Activated CD4-positive, alpha-beta memory T cell treated with anti-CD3 and anti-CD28 coated beads for 36 hours (primary cell): ENCODE measurements at regions of chr12 and their contacts with region 1.

Region 1: DNA sequence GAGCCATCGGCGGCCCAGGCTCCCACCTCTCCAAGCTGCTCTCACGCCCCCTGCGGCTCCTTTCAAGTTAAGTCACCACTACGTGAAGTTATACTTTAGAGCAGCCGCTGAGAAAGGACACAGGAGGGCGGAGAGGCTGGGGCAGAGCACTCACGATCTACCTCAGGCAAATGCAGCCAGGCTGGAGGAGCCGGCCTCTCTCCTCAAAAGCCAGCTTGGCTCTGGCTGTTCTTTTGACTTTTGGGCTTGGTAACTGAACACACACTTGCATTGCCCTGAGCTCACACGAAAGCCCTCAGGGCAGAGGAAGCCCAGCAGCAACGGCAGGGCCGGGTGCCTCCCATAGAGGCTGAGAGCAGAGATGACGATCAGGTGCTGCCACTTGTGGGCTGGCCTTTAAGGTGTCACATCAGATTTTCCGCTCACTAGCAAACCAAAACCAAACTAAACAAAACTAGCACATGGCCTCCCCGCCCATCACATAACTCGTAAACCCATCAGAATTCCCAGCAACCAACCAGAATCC is 75.2 kb downstream of the PITPNM2 start:
- DNase-seq: peak; percentile 88
- H3K4me3 Mint-ChIP-seq: peak overlapping the region; percentile 68
- H3K27ac Mint-ChIP-seq: peak overlapping the region; percentile 95
- H3K4me1 Mint-ChIP-seq: peaks cover 41% of the 10 kb centered on the region
- H3K27me3 Mint-ChIP-seq: no peaks in the 10 kb centered on the region

Region 2: DNA sequence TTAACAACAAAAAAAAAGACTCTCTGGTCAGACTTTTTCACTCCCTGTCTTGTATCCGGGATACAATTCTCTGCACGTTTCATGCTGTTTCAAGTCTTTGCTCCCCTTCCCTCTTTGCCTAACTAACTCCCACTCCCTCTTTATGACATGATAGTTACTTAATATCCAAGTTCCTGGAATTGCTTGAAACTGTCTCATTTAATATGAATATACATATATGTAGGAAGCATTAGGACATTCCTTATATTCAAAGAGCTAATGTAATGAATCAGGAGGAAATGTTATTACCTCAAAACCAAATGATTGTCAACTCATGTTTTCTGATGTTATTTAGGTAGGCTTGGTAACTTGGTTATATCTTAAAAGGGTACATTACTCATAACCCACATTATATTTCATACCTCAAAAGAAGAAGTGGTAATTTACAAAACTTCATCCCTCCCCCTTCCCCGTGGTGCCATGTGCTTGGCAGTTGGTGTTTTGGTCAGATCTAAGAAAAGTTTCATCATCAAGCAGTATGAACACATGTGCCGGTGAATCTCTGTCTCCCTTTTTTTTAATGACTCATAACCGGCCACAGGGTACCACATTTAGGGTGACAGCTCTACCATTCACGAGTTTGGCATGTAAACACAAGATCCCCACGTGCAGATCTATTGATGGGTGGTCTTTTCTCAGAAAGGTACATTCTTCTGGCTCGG is 429.0 kb before region 1 on chr12:
- CTCF ChIA-PET with region 1: no interaction called
- POLR2A ChIA-PET with region 1: no interaction called
- intact Hi-C with region 1: no loop called
- DNase-seq: peak; percentile 80
- H3K4me3 Mint-ChIP-seq: peak overlapping the region; percentile 47
- H3K27ac Mint-ChIP-seq: peak overlapping the region; percentile 14
- H3K4me1 Mint-ChIP-seq: peaks cover 14% of the 10 kb centered on the region
- H3K27me3 Mint-ChIP-seq: no peaks in the 10 kb centered on the region

Region 3: GRCh38 chr12:122974274-122974891 is 101.3 kb before region 1 on chr12:
- CTCF ChIA-PET with region 1: interaction called, 4 read pairs
- POLR2A ChIA-PET with region 1: interaction called, 6 read pairs
- intact Hi-C with region 1: loop called (anchors 1 kb)
- DNase-seq: peak; percentile 100
- H3K4me3 Mint-ChIP-seq: peak overlapping the region; percentile 98
- H3K27ac Mint-ChIP-seq: peak overlapping the region; percentile 99
- H3K4me1 Mint-ChIP-seq: peaks cover 25% of the 10 kb centered on the region
- H3K27me3 Mint-ChIP-seq: no peaks in the 10 kb centered on the region

Region 4: DNA sequence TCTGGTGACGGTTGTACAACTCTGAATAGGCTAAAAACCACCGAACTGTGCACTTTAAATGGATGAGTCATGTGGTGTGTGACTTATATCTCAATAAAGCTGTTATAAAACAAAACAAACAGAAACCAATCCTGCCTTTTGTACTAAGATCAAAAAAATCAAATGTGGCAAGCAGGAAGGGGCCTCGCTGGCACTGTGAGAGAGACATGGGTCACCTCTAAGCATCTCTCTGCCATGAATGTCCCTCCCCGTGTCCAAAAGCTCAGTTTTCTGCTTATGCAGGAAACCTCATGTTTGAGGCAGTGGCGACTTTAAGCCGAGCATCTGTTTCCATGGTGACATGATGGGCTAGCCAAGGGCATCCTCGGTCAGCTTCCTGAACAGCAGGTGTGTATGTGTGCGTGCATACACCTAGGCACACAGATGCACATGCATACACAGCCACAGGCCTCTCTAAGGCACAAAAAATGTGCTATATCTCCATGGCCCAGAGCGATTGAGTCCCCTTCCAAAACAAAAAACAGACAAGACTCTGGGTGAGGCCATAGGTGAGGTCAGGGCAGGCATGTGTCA is 50.8 kb before region 1 on chr12:
- CTCF ChIA-PET with region 1: no interaction called
- POLR2A ChIA-PET with region 1: no interaction called
- intact Hi-C with region 1: loop called (anchors 1 kb)
- DNase-seq: peak; percentile 66
- H3K4me3 Mint-ChIP-seq: no peak overlapping the region
- H3K27ac Mint-ChIP-seq: peak overlapping the region; percentile 80
- H3K4me1 Mint-ChIP-seq: peaks cover 18% of the 10 kb centered on the region
- H3K27me3 Mint-ChIP-seq: no peaks in the 10 kb centered on the region

Region 5: DNA sequence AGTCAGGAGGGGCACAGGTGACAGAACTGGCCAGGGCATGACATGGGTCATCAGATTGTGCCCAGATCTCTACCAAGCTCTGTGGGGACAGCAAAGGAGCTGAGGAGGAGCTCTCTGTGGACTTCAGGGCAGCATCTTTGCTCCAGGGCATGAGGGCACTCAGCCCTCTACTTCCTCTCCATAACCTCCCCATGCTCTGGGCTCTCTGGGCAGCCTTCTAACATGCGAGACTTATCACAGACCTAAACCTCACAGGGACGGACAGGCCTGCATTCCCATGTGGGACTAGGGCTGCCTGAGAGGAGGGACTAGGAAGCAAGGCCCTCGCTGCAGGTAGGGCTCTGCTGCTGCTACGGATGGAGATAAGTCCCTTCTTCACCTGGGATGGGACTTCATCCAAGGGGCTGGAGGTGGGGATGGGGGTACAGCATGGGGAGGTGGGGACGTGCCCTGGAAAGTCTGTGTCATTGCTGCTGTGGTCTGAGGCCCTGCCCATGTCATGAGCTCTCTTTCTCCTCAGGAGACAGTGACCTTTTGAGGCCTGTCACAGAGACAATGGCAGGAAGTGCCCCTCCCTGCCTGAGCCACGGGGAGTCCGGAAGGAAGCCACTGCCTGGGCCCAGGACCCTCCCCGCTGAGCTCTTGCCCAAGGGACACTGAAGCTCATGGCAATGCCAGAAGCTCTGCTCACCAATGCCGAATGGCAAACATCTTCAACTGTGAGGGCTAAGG is 31.1 kb after region 1 on chr12:
- CTCF ChIA-PET with region 1: no interaction called
- POLR2A ChIA-PET with region 1: interaction called, 5 read pairs
- intact Hi-C with region 1: loop called (anchors 1 kb)
- DNase-seq: peak; percentile 81
- H3K4me3 Mint-ChIP-seq: peak overlapping the region; percentile 27
- H3K27ac Mint-ChIP-seq: peak overlapping the region; percentile 89
- H3K4me1 Mint-ChIP-seq: peaks cover 35% of the 10 kb centered on the region
- H3K27me3 Mint-ChIP-seq: no peaks in the 10 kb centered on the region

Region 6: GRCh38 chr12:123150744-123151456 is 75.2 kb after region 1 on chr12 and contains the start of gene PITPNM2:
- CTCF ChIA-PET with region 1: interaction called, 6 read pairs
- POLR2A ChIA-PET with region 1: no interaction called
- intact Hi-C with region 1: loop called (anchors 2 kb)
- DNase-seq: peak; percentile 66
- H3K4me3 Mint-ChIP-seq: peak within 1 kb of the TSS; percentile 75
- H3K27ac Mint-ChIP-seq: no peak within 1 kb of the TSS
- H3K4me1 Mint-ChIP-seq: peaks cover 27% of the 10 kb centered on the region
- H3K27me3 Mint-ChIP-seq: peaks cover 4% of the 10 kb centered on the region
- total RNA-seq, gene PITPNM2: 5.9 to 6.5 TPM

Region 7: GRCh38 chr12:123488539-123489230 is 413.0 kb after region 1 on chr12:
- CTCF ChIA-PET with region 1: no interaction called
- POLR2A ChIA-PET with region 1: no interaction called
- intact Hi-C with region 1: no loop called
- DNase-seq: no peak
- H3K4me3 Mint-ChIP-seq: no peak overlapping the region
- H3K27ac Mint-ChIP-seq: no peak overlapping the region
- H3K4me1 Mint-ChIP-seq: peaks cover 16% of the 10 kb centered on the region
- H3K27me3 Mint-ChIP-seq: no peaks in the 10 kb centered on the region